ENCODE measurements at regions of chr1 and their contacts with region 1.

Region 1: GRCh38 chr1:5915587-5916571 is 76.3 kb downstream of the NPHP4 start:
- DNase-seq: no peak
- H3K4me3 ChIP-seq: no peak overlapping the region
- CTCF ChIP-seq: peak; percentile 61

Region 2: DNA sequence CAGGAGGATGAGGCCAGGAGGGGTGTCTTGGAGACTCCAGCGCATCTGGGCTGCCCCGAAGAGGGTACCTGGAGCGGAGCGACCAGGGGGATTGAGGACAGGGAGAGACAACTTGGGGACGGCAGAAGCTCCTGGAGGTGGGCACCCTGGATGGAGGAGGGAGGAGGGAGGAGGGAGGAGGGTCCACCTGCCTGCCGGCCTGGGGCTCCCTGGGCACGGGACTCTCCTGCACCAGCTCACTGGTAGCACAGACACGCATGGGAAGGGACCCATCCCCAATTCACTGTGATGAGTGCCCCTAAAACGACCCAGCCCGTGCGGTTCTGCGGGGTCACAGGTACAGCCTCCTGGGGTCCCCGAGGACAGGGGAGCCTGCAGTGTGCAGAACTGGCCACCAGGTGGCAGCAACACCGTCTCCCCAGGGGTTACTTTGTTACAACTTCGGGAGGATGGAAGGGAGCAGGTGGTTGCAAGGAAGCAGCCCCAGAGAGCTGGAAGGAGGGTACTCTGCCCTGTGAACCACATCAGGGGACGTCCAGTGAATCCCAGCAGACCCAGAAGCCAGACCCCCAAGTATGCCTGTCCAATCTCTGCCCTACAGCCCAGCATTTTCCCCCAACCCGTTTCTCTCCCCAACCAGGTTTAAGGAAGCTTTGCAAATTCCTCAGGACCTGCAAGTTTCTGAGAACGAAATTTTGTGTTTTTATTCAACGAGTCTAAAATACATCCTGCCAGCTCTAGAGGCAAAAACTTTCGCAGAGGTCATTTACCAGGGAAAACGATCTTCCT is 406.0 kb before region 1 on chr1:
- CTCF ChIA-PET with region 1: interaction called, 94 read pairs
- POLR2A ChIA-PET with region 1: no interaction called
- DNase-seq: no peak
- H3K4me3 ChIP-seq: no peak overlapping the region
- CTCF ChIP-seq: peak; percentile 94

Region 3: DNA sequence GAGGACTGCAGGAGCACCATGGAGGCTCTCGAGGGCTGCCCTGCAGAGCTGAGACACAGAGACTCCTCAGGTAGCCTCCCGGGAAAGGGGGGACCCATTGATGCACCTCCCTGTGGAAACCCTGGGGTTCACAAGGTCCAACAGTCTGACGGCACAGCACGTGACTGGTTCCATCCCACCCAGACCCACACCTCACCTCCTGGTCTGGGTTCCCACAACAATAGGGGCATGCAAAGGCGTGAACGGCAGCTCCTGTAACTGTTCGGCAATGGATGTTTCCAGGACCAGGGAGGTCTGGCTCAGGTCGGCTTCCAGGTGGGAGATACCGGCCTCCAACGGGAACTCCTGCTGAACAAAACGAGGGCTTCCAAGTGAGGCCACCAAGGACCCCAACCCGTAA is 10.4 kb before region 1 on chr1:
- CTCF ChIA-PET with region 1: interaction called, 13 read pairs
- POLR2A ChIA-PET with region 1: no interaction called
- DNase-seq: no peak
- H3K4me3 ChIP-seq: no peak overlapping the region
- CTCF ChIP-seq: no peak

Region 4: GRCh38 chr1:5926686-5927435 is 11.0 kb after region 1 on chr1:
- CTCF ChIA-PET with region 1: interaction called, 10 read pairs
- POLR2A ChIA-PET with region 1: no interaction called
- DNase-seq: no peak
- H3K4me3 ChIP-seq: no peak overlapping the region
- CTCF ChIP-seq: no peak

Region 5: GRCh38 chr1:5950994-5951785 is 35.3 kb after region 1 on chr1:
- CTCF ChIA-PET with region 1: no interaction called
- POLR2A ChIA-PET with region 1: no interaction called
- DNase-seq: no peak
- H3K4me3 ChIP-seq: no peak overlapping the region
- CTCF ChIP-seq: no peak